ENCODE measurements at regions of chr3 and their contacts with region 1.

Region 1: GRCh38 chr3:73432023-73432705 is 192.6 kb downstream of the PDZRN3 start:
- DNase-seq: peak in 1 of 2 experiments; percentile 50
- H3K4me3 ChIP-seq: no peak overlapping the region
- H3K4me3 Mint-ChIP-seq: no peak overlapping the region
- H3K27ac Mint-ChIP-seq: no peak overlapping the region
- H3K4me1 ChIP-seq: no peaks in the 10 kb centered on the region
- H3K4me1 Mint-ChIP-seq: no peaks in the 10 kb centered on the region
- H3K27me3 ChIP-seq: no peaks in the 10 kb centered on the region
- H3K27me3 Mint-ChIP-seq: no peaks in the 10 kb centered on the region
- CTCF ChIP-seq: peak; percentile 49 to 69

Region 2: GRCh38 chr3:73148682-73149081 is 283.5 kb before region 1 on chr3:
- CTCF ChIA-PET with region 1: no interaction called
- POLR2A ChIA-PET with region 1: no interaction called
- intact Hi-C with region 1: loop called (anchors 5 kb)
- DNase-seq: peak; percentile 58 to 67
- H3K4me3 ChIP-seq: no peak overlapping the region
- H3K4me3 Mint-ChIP-seq: peak overlapping the region; percentile 14
- H3K27ac Mint-ChIP-seq: peak overlapping the region; percentile 63
- H3K4me1 ChIP-seq: peaks cover 35% of the 10 kb centered on the region
- H3K4me1 Mint-ChIP-seq: peaks cover 23% of the 10 kb centered on the region
- H3K27me3 ChIP-seq: no peaks in the 10 kb centered on the region
- H3K27me3 Mint-ChIP-seq: no peaks in the 10 kb centered on the region
- CTCF ChIP-seq: no peak

Region 3: GRCh38 chr3:73192035-73192738 is 240.0 kb before region 1 on chr3:
- CTCF ChIA-PET with region 1: no interaction called
- POLR2A ChIA-PET with region 1: no interaction called
- intact Hi-C with region 1: loop called (anchors 1 kb)
- DNase-seq: peak; percentile 56 to 58
- H3K4me3 ChIP-seq: no peak overlapping the region
- H3K4me3 Mint-ChIP-seq: no peak overlapping the region
- H3K27ac Mint-ChIP-seq: no peak overlapping the region
- H3K4me1 ChIP-seq: no peaks in the 10 kb centered on the region
- H3K4me1 Mint-ChIP-seq: no peaks in the 10 kb centered on the region
- H3K27me3 ChIP-seq: no peaks in the 10 kb centered on the region
- H3K27me3 Mint-ChIP-seq: no peaks in the 10 kb centered on the region
- CTCF ChIP-seq: peak; percentile 57 to 66

Region 4: DNA sequence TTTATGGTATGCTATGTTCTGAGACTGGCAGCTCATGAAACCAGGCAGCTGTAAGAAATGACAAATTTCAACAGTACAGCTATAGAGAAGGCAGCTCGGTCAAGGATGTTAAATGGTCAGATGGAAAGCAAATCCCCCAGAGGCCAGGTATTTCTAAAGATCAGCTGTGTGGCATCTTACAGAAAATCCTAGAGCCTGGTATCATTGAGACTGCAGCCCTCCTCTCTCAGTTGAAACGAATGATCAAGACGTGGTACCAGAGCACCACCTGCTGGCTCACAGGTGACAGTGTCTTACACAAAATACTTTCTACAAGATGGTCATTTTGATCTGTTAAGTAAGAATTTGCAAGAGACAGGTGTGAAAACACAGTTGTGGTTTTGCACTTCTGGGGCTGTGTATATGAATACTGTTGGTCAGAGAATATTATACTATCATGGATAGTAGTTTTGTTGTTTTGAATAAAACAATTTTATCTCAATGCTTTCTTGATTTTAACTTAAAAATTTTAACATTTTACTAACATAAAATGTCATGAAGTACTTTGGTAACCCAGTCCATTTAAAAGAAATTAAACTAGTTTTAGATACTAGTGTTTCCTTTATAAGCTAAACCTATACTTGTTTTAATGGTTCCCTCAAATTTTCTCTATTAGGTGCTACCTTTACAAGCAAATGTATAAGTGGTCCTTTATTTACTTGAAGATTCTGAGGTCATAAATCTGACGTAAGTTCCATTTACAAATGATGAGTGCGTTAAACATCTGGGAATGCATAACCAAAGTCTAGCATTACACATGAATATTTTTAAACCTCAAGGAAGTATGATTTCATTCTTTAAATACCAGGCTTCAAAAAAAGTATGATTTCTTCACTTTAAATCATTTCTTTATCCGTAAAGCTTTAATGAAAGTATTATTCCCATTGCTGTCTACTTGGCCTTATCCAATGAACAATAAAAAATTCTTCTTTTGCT is 70.7 kb after region 1 on chr3:
- CTCF ChIA-PET with region 1: no interaction called
- POLR2A ChIA-PET with region 1: no interaction called
- intact Hi-C with region 1: loop called (anchors 1 kb)
- DNase-seq: peak; percentile 71 to 72
- H3K4me3 ChIP-seq: no peak overlapping the region
- H3K4me3 Mint-ChIP-seq: no peak overlapping the region
- H3K27ac Mint-ChIP-seq: no peak overlapping the region
- H3K4me1 ChIP-seq: peaks cover 14% of the 10 kb centered on the region
- H3K4me1 Mint-ChIP-seq: no peaks in the 10 kb centered on the region
- H3K27me3 ChIP-seq: no peaks in the 10 kb centered on the region
- H3K27me3 Mint-ChIP-seq: no peaks in the 10 kb centered on the region
- CTCF ChIP-seq: peak; percentile 72 to 85